Heart left ventricle (tissue), 16 donors: ENCODE measurements at regions of chr2 and their contacts with region 1.

Region 1: DNA sequence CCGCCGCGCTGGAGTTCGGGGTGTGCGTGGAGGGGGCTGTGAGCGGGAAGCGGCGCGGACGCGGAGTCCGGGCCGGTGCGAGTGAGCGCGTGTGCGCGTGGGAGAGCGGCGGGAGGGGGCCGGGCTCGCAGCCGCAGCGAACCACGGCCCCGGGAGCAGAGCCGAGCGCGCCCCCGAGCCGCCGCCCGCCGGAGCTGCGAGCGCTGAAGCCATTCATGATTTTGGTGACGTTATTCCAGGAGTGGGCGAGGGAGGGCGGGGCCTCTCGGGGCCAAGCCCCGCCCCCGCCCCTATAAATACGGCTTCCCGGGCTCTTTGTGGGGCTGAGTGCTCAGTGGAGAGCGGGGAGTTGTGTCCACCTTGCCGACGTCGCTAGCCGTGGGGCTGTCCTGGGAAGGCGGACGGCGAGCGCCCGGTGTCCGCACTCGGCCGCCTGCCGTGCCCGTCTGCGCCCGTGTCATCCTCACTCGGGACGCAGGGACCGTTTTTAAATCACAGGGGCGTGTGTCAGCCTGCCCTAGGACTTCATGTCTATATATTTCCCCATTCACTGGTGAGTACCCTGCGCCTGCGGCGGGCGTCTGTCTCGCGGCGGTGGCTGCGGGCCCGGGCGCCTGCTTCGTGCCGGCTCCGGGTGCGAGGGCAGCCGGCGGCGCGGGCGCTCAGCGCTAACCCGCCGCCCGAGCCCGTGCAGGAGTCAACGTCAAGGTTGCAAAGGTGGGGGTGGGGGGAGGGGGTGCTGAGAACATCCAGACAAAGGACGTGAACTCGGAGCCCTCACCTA is at the start of gene LBH:
- DNase-seq: peak; percentile 91 to 93 (median 91)
- ATAC-seq: peak; percentile 83 to 87 (median 86)
- H3K4me3 ChIP-seq: peak within 1 kb of the TSS; percentile 72 to 98 (median 90)
- H3K27ac ChIP-seq: peak within 1 kb of the TSS; percentile 89 to 100 (median 96)
- H3K4me1 ChIP-seq: peaks cover 0 to 57% (median 41%) of the 10 kb centered on the region in 12 donors
- H3K27me3 ChIP-seq: peaks cover 0 to 9% (median 0%) of the 10 kb centered on the region in 9 donors
- CTCF ChIP-seq: peak in 1 of 12 donors; percentile 13
- POLR2A ChIP-seq: peak; percentile 92 to 100
- total RNA-seq, gene LBH: 125 to 226 (median 169) TPM

Region 2: GRCh38 chr2:30197564-30198192 is 33.7 kb before region 1 on chr2:
- intact Hi-C with region 1: no loop called
- DNase-seq: no peak
- ATAC-seq: peak in 2 of 4 donors; percentile 34 to 35
- H3K4me3 ChIP-seq: no peak overlapping the region
- H3K27ac ChIP-seq: no peak overlapping the region
- H3K4me1 ChIP-seq: peaks cover 0 to 16% (median 7%) of the 10 kb centered on the region in 12 donors
- H3K27me3 ChIP-seq: no peaks in the 10 kb centered on the region
- CTCF ChIP-seq: peak in 1 of 12 donors; percentile 11
- POLR2A ChIP-seq: no peak

Region 3: DNA sequence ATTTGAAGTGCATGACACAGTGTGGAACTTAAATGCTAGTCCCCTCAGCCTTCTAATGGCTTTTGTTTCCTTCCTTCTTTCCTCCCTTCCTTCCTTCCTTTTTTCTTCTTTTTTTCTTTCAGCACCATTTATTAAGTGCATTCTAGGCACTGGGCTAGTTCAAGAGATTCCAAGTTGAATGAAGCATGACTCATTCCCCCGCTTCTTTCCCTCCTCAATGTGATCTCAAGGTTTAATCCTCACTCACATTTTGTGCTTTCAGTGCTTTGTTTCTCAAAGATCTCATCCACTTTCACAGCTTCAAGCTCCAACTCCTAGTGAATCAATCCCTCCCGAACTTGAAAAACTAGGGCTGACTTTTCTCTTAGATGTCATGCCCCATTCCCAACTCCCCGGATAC is 90.1 kb after region 1 on chr2:
- intact Hi-C with region 1: no loop called
- DNase-seq: no peak
- ATAC-seq: no peak
- H3K4me3 ChIP-seq: no peak overlapping the region
- H3K27ac ChIP-seq: peak overlapping the region in 1 of 12 donors; percentile 19
- H3K4me1 ChIP-seq: peaks cover 0 to 19% (median 0%) of the 10 kb centered on the region in 12 donors
- H3K27me3 ChIP-seq: no peaks in the 10 kb centered on the region
- CTCF ChIP-seq: no peak
- POLR2A ChIP-seq: no peak

Region 4: DNA sequence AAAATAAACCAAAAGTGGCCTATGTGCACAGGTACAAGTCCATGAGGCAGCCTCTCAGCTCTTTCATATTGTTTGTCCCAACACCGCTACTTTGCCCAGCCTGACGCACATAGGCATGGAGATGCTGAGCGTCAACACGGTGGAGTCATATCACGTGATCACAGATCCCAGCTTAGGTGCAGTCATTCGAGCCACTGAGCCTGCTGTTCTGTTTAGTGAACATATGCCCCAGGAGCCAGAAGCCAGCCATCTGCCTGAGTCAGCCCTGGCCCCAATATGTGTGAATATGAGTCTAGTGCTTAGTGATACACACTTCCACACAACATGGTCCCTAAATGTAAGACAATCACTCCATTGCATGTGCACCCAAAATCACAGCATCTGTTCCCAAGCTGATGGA is 127.4 kb after region 1 on chr2:
- intact Hi-C with region 1: loop called in 2 of 10 experiments (anchors 5 kb)
- DNase-seq: no peak
- ATAC-seq: no peak
- H3K4me3 ChIP-seq: no peak overlapping the region
- H3K27ac ChIP-seq: peak overlapping the region in 11 of 12 donors; percentile 71 to 90 (median 81)
- H3K4me1 ChIP-seq: peaks cover 14 to 62% (median 47%) of the 10 kb centered on the region in 12 donors
- H3K27me3 ChIP-seq: no peaks in the 10 kb centered on the region
- CTCF ChIP-seq: no peak
- POLR2A ChIP-seq: no peak

Region 5: DNA sequence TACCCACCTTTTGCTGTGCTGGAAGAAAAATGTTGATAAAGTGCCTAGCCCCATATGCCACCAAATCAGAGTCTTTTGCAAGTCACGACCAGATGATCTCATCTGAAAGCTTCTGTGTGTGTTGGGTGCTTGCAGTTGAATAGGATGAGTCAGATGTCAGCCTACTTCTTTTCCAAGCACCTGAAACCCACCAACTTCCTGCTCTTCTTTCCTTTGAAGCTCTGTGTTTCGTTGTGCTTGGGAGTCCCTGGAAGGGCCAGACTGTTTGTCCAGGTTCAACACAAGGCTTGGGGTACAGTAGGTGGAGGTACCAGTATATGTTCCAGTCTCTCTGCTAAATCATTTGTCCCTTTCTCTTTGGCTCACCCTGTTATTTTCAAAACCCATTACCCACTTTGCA is 178.8 kb after region 1 on chr2:
- intact Hi-C with region 1: loop called in 8 of 10 experiments (anchors 2 to 10 kb)
- DNase-seq: no peak
- ATAC-seq: no peak
- H3K4me3 ChIP-seq: no peak overlapping the region
- H3K27ac ChIP-seq: peak overlapping the region in 11 of 12 donors; percentile 51 to 91 (median 82)
- H3K4me1 ChIP-seq: peaks cover 3 to 77% (median 58%) of the 10 kb centered on the region in 12 donors
- H3K27me3 ChIP-seq: no peaks in the 10 kb centered on the region
- CTCF ChIP-seq: no peak
- POLR2A ChIP-seq: no peak

Region 6: DNA sequence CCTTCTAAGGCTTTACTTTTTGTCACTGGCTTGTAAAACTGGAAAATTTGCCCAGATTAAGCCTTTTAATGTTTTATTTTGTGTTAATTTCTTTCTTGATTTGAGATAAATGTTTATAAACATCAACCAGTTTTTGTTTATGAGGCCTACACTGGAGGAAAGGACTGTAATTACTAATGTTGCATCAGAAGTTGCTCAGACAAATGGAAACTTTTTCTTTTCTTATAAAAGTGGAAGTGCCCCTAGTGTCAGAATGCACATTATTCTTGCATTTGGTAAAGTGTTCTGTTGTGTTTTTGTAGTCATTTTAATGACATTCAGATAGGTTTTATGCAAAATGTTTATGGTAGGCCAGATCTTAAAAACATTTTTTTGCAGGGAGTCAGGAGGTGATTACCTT is 240.9 kb after region 1 on chr2:
- intact Hi-C with region 1: loop called in 2 of 10 experiments (anchors 5 to 10 kb)
- DNase-seq: no peak
- ATAC-seq: no peak
- H3K4me3 ChIP-seq: no peak overlapping the region
- H3K27ac ChIP-seq: no peak overlapping the region
- H3K4me1 ChIP-seq: peaks cover 0 to 45% (median 8%) of the 10 kb centered on the region in 12 donors
- H3K27me3 ChIP-seq: no peaks in the 10 kb centered on the region
- CTCF ChIP-seq: no peak
- POLR2A ChIP-seq: no peak

Region 7: GRCh38 chr2:30565851-30566358 is 334.5 kb after region 1 on chr2:
- intact Hi-C with region 1: loop called in 1 of 10 experiments (anchors 10 kb)
- DNase-seq: peak; percentile 42 to 67 (median 58)
- ATAC-seq: peak; percentile 50 to 87 (median 86)
- H3K4me3 ChIP-seq: peak overlapping the region in 2 of 12 donors; percentile 4 to 10
- H3K27ac ChIP-seq: peak overlapping the region; percentile 6 to 79 (median 62)
- H3K4me1 ChIP-seq: peaks cover 0 to 23% (median 8%) of the 10 kb centered on the region in 12 donors
- H3K27me3 ChIP-seq: no peaks in the 10 kb centered on the region
- CTCF ChIP-seq: no peak
- POLR2A ChIP-seq: no peak